Naive thymus-derived CD8-positive, alpha-beta T cell (primary cell): ENCODE measurements at regions of chr1 and their contacts with region 1.

Region 1: DNA sequence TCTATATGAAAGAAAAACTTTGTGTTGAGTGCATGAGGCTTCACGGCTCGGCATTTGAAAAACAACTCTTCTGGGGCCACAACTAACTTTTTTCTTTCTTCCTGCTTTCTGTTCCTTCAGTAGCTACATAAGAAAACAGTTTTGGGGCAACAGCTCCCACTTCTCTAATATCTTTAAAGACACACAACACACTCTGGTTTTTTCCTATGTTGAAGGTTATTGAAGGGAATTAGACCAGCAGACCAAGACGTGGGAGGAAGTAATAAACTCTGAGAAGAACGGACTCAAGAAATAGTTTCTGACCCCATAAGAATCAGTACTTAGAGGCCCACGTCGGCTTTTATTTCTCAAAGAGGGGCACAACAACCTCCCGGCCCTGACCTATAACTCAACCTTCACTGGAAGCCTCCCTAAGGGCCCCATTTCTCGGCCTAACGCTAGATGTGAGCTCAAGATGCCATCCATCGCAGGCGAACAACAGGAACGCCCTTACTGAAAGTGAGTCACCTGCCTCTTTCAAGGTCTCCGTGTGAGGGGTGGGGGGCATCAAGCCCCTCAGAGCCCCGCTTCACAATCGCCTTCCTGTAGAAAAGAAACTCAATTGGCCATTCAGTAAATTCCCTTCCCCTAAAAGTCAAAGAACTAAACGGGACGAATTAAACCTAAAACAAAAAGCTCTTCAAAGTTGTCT is 844 bp downstream of the ZMYM6 start:
- DNase-seq: peak in 8 of 10 donors; percentile 7 to 67 (median 20)
- ATAC-seq: peak; percentile 42 to 61
- H3K4me3 Mint-ChIP-seq: peak overlapping the region; percentile 96 to 100 (median 98)
- H3K27ac Mint-ChIP-seq: peak overlapping the region; percentile 89 to 99 (median 99)
- H3K4me1 Mint-ChIP-seq: peaks cover 18 to 51% (median 47%) of the 10 kb centered on the region in 4 donors
- H3K27me3 Mint-ChIP-seq: no peaks in the 10 kb centered on the region

Region 2: GRCh38 chr1:34984793-34985608 is 45.9 kb before region 1 on chr1 and contains the start of gene TMEM35B:
- POLR2A ChIA-PET with region 1: interaction called, 20 read pairs
- DNase-seq: peak; percentile 67 to 85 (median 76)
- ATAC-seq: peak; percentile 94 to 96
- H3K4me3 Mint-ChIP-seq: peak within 1 kb of the TSS; percentile 91 to 100 (median 98)
- H3K27ac Mint-ChIP-seq: peak within 1 kb of the TSS; percentile 91 to 100 (median 98)
- H3K4me1 Mint-ChIP-seq: peaks cover 17 to 60% (median 38%) of the 10 kb centered on the region in 4 donors
- H3K27me3 Mint-ChIP-seq: no peaks in the 10 kb centered on the region
- polyA plus RNA-seq, gene TMEM35B: 145 to 154 (median 146) TPM